CD4-positive, alpha-beta T cell (primary cell): ENCODE measurements at regions of chr5 and their contacts with region 1.

Region 1: DNA sequence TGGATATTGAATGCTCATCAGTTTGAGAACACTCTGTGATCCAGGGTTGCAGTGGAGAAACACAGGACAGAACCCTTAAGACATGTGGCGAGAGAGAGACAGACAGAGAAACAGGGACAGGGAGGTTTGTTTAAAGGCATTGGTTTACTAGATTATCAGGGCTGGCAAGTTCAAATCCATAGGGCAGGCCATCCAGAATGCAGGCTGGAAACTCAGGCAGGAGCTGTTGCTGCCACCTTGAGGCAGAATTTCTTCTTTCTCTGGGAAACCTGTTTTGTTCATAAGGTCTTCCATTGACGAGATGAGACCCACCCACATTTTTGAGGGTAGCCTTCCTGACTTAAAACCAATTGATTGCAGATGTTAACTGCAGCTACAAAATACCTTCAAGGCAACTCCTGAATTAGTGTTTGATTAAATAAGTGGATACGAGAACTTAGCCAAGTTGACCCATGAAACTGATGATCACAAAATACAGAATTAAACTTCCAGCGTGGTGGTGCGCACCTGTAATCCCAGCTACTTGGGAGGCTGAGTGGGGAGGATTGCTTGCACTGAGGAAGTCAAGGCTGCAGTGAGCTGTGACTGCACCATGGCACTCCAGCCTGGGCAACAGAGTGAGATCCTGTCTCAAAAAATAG is 55.9 kb downstream of the NSUN2 start:
- DNase-seq: peak in 4 of 14 experiments; percentile 12 to 34 (median 23)
- ATAC-seq: no peak
- H3K4me3 ChIP-seq: no peak overlapping the region
- H3K4me3 Mint-ChIP-seq: no peak overlapping the region
- H3K27ac ChIP-seq: no peak overlapping the region
- H3K27ac Mint-ChIP-seq: no peak overlapping the region
- H3K4me1 ChIP-seq: no peaks in the 10 kb centered on the region
- H3K4me1 Mint-ChIP-seq: no peaks in the 10 kb centered on the region
- H3K27me3 ChIP-seq: peaks cover 6 to 12% of the 10 kb centered on the region in 2 experiments
- H3K27me3 Mint-ChIP-seq: peaks cover 55% of the 10 kb centered on the region
- CTCF ChIP-seq: no peak

Region 2: DNA sequence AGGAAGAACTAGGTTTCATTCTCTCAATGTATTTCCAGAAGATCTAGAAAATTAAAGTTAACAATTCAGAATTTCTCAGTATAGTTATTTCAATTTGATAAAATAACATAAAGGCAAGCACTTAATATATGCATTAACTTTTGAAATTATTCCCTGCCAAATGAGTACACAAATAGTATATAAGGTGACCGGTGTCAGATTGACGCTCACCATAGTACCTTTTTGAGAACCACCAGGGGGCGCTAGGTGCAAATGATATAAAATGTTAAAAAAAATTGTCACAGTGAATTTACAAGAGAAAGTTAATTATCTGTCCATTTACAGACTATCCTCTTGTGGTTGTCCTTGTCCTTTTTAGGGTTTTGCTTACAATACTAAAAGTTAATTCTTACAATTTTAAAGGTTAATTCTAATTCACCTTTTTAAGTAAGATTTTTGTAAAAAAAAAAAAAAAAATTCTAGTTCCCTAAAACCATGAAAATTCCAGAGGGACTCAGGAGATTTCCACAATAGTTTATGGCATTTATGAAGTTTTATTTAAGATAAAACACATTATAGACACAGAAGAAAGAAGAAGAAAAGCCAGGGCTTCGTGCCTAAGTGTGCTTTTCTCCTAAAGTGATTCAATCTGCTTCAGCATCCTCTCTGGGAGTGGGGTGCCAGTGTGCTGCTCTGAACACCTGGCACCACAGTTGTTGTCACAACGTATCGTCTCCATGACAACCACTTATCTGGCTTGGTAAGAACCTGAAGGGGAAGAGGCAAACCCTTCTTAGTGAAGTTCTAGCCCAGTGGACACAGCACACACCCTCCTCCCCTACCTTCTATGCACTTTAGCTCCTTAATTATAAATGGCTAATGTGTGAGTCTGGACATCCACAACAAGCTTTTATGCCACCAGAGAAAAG is 1435.1 kb before region 1 on chr5:
- CTCF ChIA-PET with region 1: no interaction called
- POLR2A ChIA-PET with region 1: no interaction called
- intact Hi-C with region 1: loop called in 1 of 2 experiments (anchors 5 kb)
- DNase-seq: peak in 13 of 14 experiments; percentile 4 to 70 (median 40)
- ATAC-seq: no peak
- H3K4me3 ChIP-seq: no peak overlapping the region
- H3K4me3 Mint-ChIP-seq: no peak overlapping the region
- H3K27ac ChIP-seq: no peak overlapping the region
- H3K27ac Mint-ChIP-seq: no peak overlapping the region
- H3K4me1 ChIP-seq: no peaks in the 10 kb centered on the region
- H3K4me1 Mint-ChIP-seq: peaks cover 9% of the 10 kb centered on the region
- H3K27me3 ChIP-seq: peaks cover 3 to 12% of the 10 kb centered on the region in 2 experiments
- H3K27me3 Mint-ChIP-seq: peaks cover 47% of the 10 kb centered on the region
- CTCF ChIP-seq: peak; percentile 75

Region 3: DNA sequence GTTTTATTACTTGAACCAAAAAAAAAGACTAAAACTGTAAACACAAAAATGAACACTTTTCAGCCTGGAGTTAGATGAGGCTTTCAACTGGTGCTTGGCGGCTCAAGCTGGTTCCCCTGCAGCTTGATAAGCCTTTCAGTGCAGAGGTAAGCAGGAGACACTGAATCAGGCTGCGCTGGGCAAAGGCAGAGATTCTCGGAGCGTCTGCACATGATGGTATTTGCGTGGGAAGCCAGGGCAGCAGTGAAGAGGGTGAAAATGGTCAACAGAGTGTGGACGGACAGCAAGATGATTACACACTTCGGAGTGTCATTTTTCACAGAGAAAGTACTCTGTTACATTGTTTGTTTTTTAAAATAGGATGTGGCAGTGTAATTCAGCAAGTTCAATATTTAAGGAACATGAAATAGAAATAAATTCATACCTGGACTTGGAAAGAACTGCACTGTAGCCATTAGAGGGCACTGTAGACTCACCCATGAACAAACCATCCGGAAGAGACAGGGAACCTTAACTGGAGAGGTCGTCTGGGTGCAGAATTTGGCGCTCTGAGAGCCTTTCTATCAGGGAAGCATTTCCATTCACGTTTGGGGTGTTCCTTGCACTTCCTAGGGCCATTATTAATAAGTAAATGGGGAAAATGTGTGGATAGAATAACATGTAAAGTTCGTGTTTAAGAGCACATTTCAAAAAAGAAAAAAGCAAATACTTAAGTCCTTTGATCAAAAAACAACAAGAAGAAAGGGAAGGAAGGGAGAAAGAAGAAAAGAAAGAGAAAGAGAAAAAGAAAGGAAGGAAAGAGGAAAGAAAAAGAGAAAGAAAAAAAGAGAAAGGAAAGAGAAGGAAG is 1084.7 kb before region 1 on chr5:
- CTCF ChIA-PET with region 1: no interaction called
- POLR2A ChIA-PET with region 1: no interaction called
- intact Hi-C with region 1: loop called (anchors 2 to 5 kb)
- DNase-seq: peak in 10 of 14 experiments; percentile 8 to 81 (median 28)
- ATAC-seq: peak; percentile 41
- H3K4me3 ChIP-seq: no peak overlapping the region
- H3K4me3 Mint-ChIP-seq: peak overlapping the region; percentile 69
- H3K27ac ChIP-seq: no peak overlapping the region
- H3K27ac Mint-ChIP-seq: no peak overlapping the region
- H3K4me1 ChIP-seq: peaks cover 21% of the 10 kb centered on the region
- H3K4me1 Mint-ChIP-seq: peaks cover 18% of the 10 kb centered on the region
- H3K27me3 ChIP-seq: no peaks in the 10 kb centered on the region
- H3K27me3 Mint-ChIP-seq: peaks cover 16% of the 10 kb centered on the region
- CTCF ChIP-seq: peak; percentile 64

Region 4: GRCh38 chr5:5504325-5504724 is 1072.7 kb before region 1 on chr5:
- CTCF ChIA-PET with region 1: no interaction called
- POLR2A ChIA-PET with region 1: no interaction called
- intact Hi-C with region 1: loop called in 1 of 2 experiments (anchors 5 kb)
- DNase-seq: no peak
- ATAC-seq: no peak
- H3K4me3 ChIP-seq: no peak overlapping the region
- H3K4me3 Mint-ChIP-seq: no peak overlapping the region
- H3K27ac ChIP-seq: no peak overlapping the region
- H3K27ac Mint-ChIP-seq: no peak overlapping the region
- H3K4me1 ChIP-seq: no peaks in the 10 kb centered on the region
- H3K4me1 Mint-ChIP-seq: no peaks in the 10 kb centered on the region
- H3K27me3 ChIP-seq: peaks cover 17 to 22% of the 10 kb centered on the region in 2 experiments
- H3K27me3 Mint-ChIP-seq: peaks cover 57% of the 10 kb centered on the region
- CTCF ChIP-seq: no peak

Region 5: DNA sequence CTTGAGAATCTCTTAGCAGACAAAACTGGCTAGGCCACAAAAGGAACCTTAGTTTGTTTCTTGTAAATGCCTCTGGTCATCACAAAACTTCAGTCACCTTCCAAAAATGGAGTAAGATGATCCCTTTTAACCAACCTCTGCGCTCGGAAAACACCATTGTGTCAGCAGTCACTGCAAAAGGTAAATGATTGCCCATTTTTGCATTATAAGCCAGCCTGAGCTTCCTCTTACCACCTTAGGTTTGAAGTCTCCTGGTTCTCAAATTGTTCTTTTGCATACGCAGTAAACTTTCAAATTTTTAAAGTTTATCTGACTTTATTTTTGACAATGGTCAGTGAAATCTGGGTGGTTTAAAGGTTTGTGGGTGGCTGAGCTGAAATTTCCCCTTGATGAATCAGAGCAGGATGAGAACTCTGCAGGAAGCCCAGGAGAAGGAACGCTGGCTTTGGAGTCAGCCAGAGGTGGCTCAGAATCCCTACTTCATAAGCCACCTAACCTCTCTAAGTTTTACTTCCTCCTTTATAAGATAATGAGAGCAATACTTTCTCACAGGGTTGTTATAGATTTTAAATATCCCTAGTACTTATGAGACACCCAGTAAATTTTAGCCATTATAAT is 330.1 kb before region 1 on chr5:
- CTCF ChIA-PET with region 1: no interaction called
- POLR2A ChIA-PET with region 1: no interaction called
- intact Hi-C with region 1: no loop called
- DNase-seq: no peak
- ATAC-seq: no peak
- H3K4me3 ChIP-seq: no peak overlapping the region
- H3K4me3 Mint-ChIP-seq: no peak overlapping the region
- H3K27ac ChIP-seq: no peak overlapping the region
- H3K27ac Mint-ChIP-seq: no peak overlapping the region
- H3K4me1 ChIP-seq: no peaks in the 10 kb centered on the region
- H3K4me1 Mint-ChIP-seq: no peaks in the 10 kb centered on the region
- H3K27me3 ChIP-seq: no peaks in the 10 kb centered on the region
- H3K27me3 Mint-ChIP-seq: peaks cover 4% of the 10 kb centered on the region
- CTCF ChIP-seq: no peak

Region 6: GRCh38 chr5:6291961-6292360 is 285.0 kb before region 1 on chr5:
- CTCF ChIA-PET with region 1: no interaction called
- POLR2A ChIA-PET with region 1: no interaction called
- intact Hi-C with region 1: loop called in 1 of 2 experiments (anchors 1 kb)
- DNase-seq: peak in 4 of 14 experiments; percentile 19 to 49 (median 30)
- ATAC-seq: no peak
- H3K4me3 ChIP-seq: no peak overlapping the region
- H3K4me3 Mint-ChIP-seq: no peak overlapping the region
- H3K27ac ChIP-seq: no peak overlapping the region
- H3K27ac Mint-ChIP-seq: no peak overlapping the region
- H3K4me1 ChIP-seq: no peaks in the 10 kb centered on the region
- H3K4me1 Mint-ChIP-seq: no peaks in the 10 kb centered on the region
- H3K27me3 ChIP-seq: no peaks in the 10 kb centered on the region
- H3K27me3 Mint-ChIP-seq: peaks cover 10% of the 10 kb centered on the region
- CTCF ChIP-seq: peak; percentile 39